ENCODE measurements at regions of chr17 and their contacts with region 1.

Region 1: GRCh38 chr17:2282297-2282873 is 21.2 kb downstream of the SMG6 start:
- DNase-seq: no peak
- ATAC-seq: peak; percentile 80
- H3K4me3 Mint-ChIP-seq: no peak overlapping the region
- H3K27ac Mint-ChIP-seq: peak overlapping the region; percentile 58
- H3K4me1 Mint-ChIP-seq: peaks cover 31% of the 10 kb centered on the region
- H3K27me3 Mint-ChIP-seq: no peaks in the 10 kb centered on the region

Region 2: GRCh38 chr17:2295575-2295974 is 13.2 kb after region 1 on chr17:
- CTCF ChIA-PET with region 1: interaction called, 4 read pairs
- POLR2A ChIA-PET with region 1: no interaction called
- intact Hi-C with region 1: loop called in 1 of 2 experiments (anchors 2 kb)
- DNase-seq: peak; percentile 31
- ATAC-seq: peak; percentile 87
- H3K4me3 Mint-ChIP-seq: no peak overlapping the region
- H3K27ac Mint-ChIP-seq: peak overlapping the region; percentile 63
- H3K4me1 Mint-ChIP-seq: peaks cover 47% of the 10 kb centered on the region
- H3K27me3 Mint-ChIP-seq: no peaks in the 10 kb centered on the region